GM12878 (cell line): ENCODE measurements at regions of chr17 and their contacts with region 1.

Region 1: DNA sequence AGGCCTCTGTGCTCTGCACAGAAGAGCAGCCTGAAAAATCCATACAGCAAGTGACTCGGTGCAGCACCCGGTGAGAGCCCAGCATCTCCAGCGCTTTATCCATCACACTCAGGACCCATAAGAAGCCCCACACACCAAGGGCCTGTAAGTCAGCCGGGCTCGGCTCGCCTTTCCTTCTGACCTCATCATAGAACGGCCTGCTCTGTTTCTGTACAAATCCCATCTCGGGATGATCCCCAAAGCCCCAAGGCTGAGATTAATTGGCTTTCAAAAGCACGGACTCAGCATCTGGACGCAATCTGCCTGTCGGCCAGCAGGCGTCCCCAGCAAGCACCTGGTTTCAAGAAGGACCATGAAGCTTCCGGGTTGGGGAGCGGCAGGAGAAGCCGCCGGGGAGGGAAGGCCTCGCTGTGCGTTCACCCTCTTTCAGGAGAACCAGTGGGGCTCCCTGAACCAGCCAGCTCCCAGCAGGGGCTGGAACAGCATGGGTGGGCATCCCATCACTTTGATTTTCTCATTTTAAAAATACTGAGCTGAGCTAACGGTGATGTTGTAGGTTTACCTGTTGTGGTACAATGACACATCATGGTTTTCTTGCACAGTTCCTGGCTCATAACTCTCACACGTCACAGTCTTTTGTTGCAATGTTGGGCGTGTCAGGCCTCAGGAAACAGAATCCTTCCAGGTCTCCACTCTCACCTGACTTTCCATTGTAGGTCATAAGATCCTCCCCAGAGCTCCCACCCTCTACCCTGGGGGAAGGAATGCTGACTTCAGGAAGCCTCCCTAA is 6.7 kb downstream of the CCDC57 start:
- DNase-seq: no peak
- ATAC-seq: peak; percentile 96
- H3K4me3 ChIP-seq: peak overlapping the region; percentile 38; the same call in 1 of the 2 replicates
- H3K27ac ChIP-seq: peak overlapping the region; percentile 78
- H3K4me1 ChIP-seq: peaks cover 9% of the 10 kb centered on the region
- H3K27me3 ChIP-seq: no peaks in the 10 kb centered on the region
- CTCF ChIP-seq: peak; percentile 96 to 97 (median 97)
- EP300 ChIP-seq: no peak
- POLR2A ChIP-seq: peak; percentile 97
- RAD21 ChIP-seq: peak; percentile 67

Region 2: DNA sequence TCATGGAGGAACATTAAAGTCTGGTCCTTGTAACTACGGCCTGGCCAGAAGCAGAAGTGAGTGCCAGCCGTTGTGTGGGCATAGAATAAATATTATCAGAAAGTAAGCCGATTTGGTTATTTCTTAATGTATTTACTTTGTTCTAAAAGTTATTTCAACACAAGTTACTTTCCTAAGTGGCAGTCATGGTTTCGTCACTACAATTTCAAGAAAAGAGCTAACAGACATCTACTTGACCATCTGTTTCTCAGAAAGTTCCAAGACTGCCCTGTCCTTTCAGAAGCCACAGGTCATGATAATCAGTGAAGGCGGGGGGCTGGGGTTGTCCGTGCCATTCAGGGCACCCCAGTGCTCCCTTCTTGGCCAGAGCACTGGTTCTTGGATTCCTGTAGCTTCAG is 93.0 kb before region 1 on chr17:
- CTCF ChIA-PET with region 1: no interaction called
- POLR2A ChIA-PET with region 1: no interaction called
- RAD21 ChIA-PET with region 1: no interaction called
- SMC1A ChIA-PET with region 1: no interaction called
- in situ Hi-C with region 1: no loop called
- intact Hi-C with region 1: no loop called
- DNase-seq: no peak
- ATAC-seq: no peak
- H3K4me3 ChIP-seq: no peak overlapping the region
- H3K27ac ChIP-seq: no peak overlapping the region
- H3K4me1 ChIP-seq: no peaks in the 10 kb centered on the region
- H3K27me3 ChIP-seq: no peaks in the 10 kb centered on the region
- CTCF ChIP-seq: no peak
- EP300 ChIP-seq: no peak
- POLR2A ChIP-seq: no peak
- RAD21 ChIP-seq: no peak

Region 3: DNA sequence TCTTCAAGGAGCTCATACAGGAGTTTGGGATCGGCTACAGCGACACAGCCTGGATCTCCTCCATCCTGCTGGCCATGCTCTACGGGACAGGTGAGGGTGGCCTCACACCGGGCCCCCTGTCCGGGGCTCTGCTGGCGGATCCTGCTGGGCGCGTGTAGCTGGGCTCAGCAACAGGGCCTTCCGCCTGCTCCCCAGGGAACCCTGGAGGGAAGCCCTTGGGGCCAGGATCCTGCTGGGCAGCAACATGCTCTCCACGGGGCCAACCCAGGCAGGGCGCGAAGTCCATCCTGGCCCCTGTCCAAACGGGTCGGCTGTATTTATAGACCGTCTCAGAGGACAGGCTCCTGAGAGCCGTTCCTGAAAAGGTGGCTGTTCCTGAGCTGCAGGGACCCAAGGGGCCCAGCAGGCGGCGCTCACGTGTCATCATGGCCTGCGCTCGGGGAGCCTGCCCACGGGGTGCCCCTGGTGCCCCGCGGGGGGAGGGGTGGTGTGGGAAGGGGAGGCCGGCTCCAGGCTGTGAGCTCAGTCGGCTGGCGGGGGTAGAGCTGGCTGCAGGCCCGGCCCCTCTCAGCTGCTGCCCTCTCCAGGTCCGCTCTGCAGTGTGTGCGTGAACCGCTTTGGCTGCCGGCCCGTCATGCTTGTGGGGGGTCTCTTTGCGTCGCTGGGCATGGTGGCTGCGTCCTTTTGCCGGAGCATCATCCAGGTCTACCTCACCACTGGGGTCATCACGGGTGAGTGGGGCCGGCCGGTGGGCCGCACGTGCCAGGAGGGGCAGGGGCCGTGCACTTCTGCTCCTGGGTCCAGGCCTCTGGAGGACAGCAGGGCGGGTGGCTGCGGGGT is 30.4 kb after region 1 on chr17:
- CTCF ChIA-PET with region 1: interaction called, 14 read pairs
- POLR2A ChIA-PET with region 1: interaction called, 3 read pairs
- RAD21 ChIA-PET with region 1: interaction called, 10 read pairs
- SMC1A ChIA-PET with region 1: interaction called, 8 read pairs
- in situ Hi-C with region 1: no loop called
- intact Hi-C with region 1: no loop called
- DNase-seq: no peak
- ATAC-seq: peak; percentile 41
- H3K4me3 ChIP-seq: no peak overlapping the region
- H3K27ac ChIP-seq: no peak overlapping the region
- H3K4me1 ChIP-seq: peaks cover 64% of the 10 kb centered on the region
- H3K27me3 ChIP-seq: no peaks in the 10 kb centered on the region
- CTCF ChIP-seq: peak; percentile 74 to 91 (median 78)
- EP300 ChIP-seq: no peak
- POLR2A ChIP-seq: no peak
- RAD21 ChIP-seq: peak; percentile 71

Region 4: DNA sequence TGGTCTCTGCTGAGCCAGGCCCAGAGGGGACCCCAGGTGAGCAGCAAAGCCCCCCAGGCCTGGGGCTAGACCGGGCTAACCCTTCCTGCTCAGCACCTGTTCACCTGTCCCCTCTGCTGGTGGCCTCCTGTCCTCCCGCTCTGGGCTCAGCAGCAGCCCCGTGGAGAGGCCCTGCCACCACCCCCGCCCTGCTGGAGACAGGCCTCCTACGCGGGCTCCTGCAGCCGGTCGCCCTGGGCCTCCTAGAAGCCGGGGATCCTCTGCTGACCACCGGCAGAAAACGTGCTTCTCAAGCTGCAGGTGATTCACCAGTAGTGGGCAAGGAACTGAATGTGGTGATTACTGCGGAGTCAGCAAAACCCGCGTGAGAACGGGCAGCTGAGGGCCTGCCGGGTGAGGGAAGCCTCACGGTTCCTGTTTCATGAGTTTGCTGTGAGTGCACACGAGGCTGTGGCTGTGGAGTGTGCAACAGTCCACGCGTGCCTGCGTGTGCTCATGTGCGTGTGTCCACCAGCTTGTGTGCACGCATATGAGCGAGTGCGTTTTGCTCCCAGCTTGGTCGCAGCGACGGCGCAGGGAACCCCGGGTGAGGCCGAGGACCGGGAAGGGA is 126.9 kb after region 1 on chr17:
- CTCF ChIA-PET with region 1: no interaction called
- POLR2A ChIA-PET with region 1: no interaction called
- RAD21 ChIA-PET with region 1: no interaction called
- SMC1A ChIA-PET with region 1: no interaction called
- in situ Hi-C with region 1: no loop called
- intact Hi-C with region 1: no loop called
- DNase-seq: no peak
- ATAC-seq: peak; percentile 44
- H3K4me3 ChIP-seq: no peak overlapping the region
- H3K27ac ChIP-seq: no peak overlapping the region
- H3K4me1 ChIP-seq: peaks cover 11% of the 10 kb centered on the region
- H3K27me3 ChIP-seq: peaks cover 6 to 12% of the 10 kb centered on the region in 2 experiments; a peak in 3 of 4 replicates
- CTCF ChIP-seq: no peak
- EP300 ChIP-seq: no peak
- POLR2A ChIP-seq: no peak
- RAD21 ChIP-seq: no peak